T-cell (primary cell): ENCODE measurements at regions of chr12 and their contacts with region 1.

Region 1: DNA sequence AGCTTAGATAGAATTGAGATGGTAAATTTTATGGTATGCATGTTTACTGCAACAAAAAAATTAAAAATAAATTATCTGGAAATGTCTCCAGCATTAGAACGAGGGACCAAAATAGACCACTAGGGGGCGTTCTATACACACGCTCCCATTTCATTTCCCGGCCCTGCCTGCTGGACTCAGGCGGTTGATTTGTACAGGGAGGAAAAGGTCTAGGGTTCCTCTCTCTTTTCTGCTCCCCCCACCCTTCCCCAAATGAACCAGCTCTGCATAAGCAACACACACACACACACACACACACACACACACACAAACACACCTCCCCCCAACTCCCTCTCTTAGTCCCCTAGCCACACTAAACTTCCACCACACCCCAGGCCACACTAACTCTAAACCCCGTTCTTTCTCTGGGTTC is 7.8 kb upstream of the DTX1 start:
- DNase-seq: peak; percentile 10 to 83 (median 45)
- ATAC-seq: peak; percentile 74 to 83 (median 76)
- H3K4me3 ChIP-seq: no peak overlapping the region
- H3K4me3 Mint-ChIP-seq: no peak overlapping the region
- H3K27ac ChIP-seq: no peak overlapping the region
- H3K27ac Mint-ChIP-seq: peak overlapping the region in 1 of 2 donors; percentile 57
- H3K4me1 ChIP-seq: peaks cover 6 to 18% of the 10 kb centered on the region in 2 experiments
- H3K4me1 Mint-ChIP-seq: peaks cover 20 to 46% (median 42%) of the 10 kb centered on the region in 3 donors
- H3K27me3 ChIP-seq: peaks cover 0 to 3% of the 10 kb centered on the region in 2 experiments
- H3K27me3 Mint-ChIP-seq: peaks cover 4 to 7% of the 10 kb centered on the region in 2 donors

Region 2: GRCh38 chr12:113088971-113089756 is 40.4 kb after region 1 on chr12:
- CTCF ChIA-PET with region 1: interaction called in 1 of 2 experiments, 11 read pairs
- POLR2A ChIA-PET with region 1: no interaction called
- DNase-seq: peak in 32 of 35 experiments; percentile 23 to 63 (median 34)
- ATAC-seq: peak; percentile 50 to 64 (median 59)
- H3K4me3 ChIP-seq: peak overlapping the region; percentile 15 to 30
- H3K4me3 Mint-ChIP-seq: peak overlapping the region; percentile 21 to 75 (median 55)
- H3K27ac ChIP-seq: peak overlapping the region; percentile 69
- H3K27ac Mint-ChIP-seq: peak overlapping the region; percentile 69 to 95
- H3K4me1 ChIP-seq: peaks cover 56 to 91% of the 10 kb centered on the region in 2 experiments
- H3K4me1 Mint-ChIP-seq: peaks cover 83 to 94% (median 94%) of the 10 kb centered on the region in 3 donors
- H3K27me3 ChIP-seq: no peaks in the 10 kb centered on the region
- H3K27me3 Mint-ChIP-seq: no peaks in the 10 kb centered on the region